CD4-positive, alpha-beta memory T cell (primary cell): ENCODE measurements at regions of chr17 and their contacts with region 1.

Region 1: DNA sequence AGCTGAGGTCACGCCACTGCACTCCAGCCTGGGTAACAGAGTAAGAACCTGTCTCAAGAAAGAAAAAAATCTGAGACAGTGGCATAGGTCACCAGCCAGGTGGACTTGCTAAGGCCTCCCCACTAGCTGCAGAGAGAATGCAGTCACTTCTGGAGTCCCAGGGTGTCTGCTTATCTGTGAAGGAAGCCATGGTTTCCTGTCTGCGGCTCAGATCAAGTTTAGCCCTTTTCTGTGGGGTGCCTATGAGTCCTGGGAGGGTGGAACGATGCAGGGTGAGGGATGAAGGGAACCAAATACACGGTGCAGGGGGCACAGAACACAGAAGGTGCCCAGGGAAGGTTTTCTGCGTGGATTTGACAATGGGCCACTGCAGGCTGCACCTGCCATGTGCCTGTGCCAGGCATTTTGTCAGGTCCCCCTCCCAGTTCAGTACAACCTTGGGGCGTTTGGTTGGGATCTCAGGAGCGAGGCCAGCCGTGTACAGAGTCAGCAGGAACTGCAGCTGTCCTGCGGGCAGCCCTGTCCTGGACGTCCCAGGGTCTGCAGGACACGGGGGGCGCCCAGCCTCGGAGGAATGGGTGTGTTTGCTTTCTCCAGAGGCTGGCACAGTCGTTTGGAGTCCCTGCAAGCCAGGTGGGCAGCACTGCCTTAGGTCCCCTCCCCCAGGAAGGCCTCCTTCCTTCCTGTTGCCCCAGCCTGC is 41.8 kb downstream of the RAB11FIP4 start:
- DNase-seq: peak; percentile 36 to 74 (median 46)
- H3K4me3 ChIP-seq: no peak overlapping the region
- H3K4me3 Mint-ChIP-seq: peak overlapping the region in 5 of 8 donors; percentile 37 to 82 (median 55)
- H3K27ac ChIP-seq: no peak overlapping the region
- H3K27ac Mint-ChIP-seq: peak overlapping the region in 1 of 7 donors; percentile 82
- H3K4me1 ChIP-seq: peaks cover 18% of the 10 kb centered on the region
- H3K4me1 Mint-ChIP-seq: peaks cover 10 to 26% (median 17%) of the 10 kb centered on the region in 4 donors
- H3K27me3 ChIP-seq: no peaks in the 10 kb centered on the region
- H3K27me3 Mint-ChIP-seq: peaks cover 6 to 12% of the 10 kb centered on the region in 2 donors

Region 2: GRCh38 chr17:31195305-31195704 is 237.9 kb before region 1 on chr17:
- CTCF ChIA-PET with region 1: no interaction called
- POLR2A ChIA-PET with region 1: no interaction called
- intact Hi-C with region 1: no loop called
- DNase-seq: no peak
- H3K4me3 ChIP-seq: no peak overlapping the region
- H3K4me3 Mint-ChIP-seq: no peak overlapping the region
- H3K27ac ChIP-seq: no peak overlapping the region
- H3K27ac Mint-ChIP-seq: no peak overlapping the region
- H3K4me1 ChIP-seq: no peaks in the 10 kb centered on the region
- H3K4me1 Mint-ChIP-seq: no peaks in the 10 kb centered on the region
- H3K27me3 ChIP-seq: no peaks in the 10 kb centered on the region
- H3K27me3 Mint-ChIP-seq: no peaks in the 10 kb centered on the region

Region 3: GRCh38 chr17:31388770-31389661 is 44.2 kb before region 1 on chr17:
- CTCF ChIA-PET with region 1: interaction called, 11 read pairs
- POLR2A ChIA-PET with region 1: no interaction called
- intact Hi-C with region 1: no loop called
- DNase-seq: peak in 4 of 5 donors; percentile 21 to 40 (median 32)
- H3K4me3 ChIP-seq: no peak overlapping the region
- H3K4me3 Mint-ChIP-seq: no peak overlapping the region
- H3K27ac ChIP-seq: no peak overlapping the region
- H3K27ac Mint-ChIP-seq: no peak overlapping the region
- H3K4me1 ChIP-seq: peaks cover 9% of the 10 kb centered on the region
- H3K4me1 Mint-ChIP-seq: peaks cover 2 to 23% (median 5%) of the 10 kb centered on the region in 4 donors
- H3K27me3 ChIP-seq: peaks cover 8% of the 10 kb centered on the region
- H3K27me3 Mint-ChIP-seq: peaks cover 15 to 23% of the 10 kb centered on the region in 2 donors

Region 4: DNA sequence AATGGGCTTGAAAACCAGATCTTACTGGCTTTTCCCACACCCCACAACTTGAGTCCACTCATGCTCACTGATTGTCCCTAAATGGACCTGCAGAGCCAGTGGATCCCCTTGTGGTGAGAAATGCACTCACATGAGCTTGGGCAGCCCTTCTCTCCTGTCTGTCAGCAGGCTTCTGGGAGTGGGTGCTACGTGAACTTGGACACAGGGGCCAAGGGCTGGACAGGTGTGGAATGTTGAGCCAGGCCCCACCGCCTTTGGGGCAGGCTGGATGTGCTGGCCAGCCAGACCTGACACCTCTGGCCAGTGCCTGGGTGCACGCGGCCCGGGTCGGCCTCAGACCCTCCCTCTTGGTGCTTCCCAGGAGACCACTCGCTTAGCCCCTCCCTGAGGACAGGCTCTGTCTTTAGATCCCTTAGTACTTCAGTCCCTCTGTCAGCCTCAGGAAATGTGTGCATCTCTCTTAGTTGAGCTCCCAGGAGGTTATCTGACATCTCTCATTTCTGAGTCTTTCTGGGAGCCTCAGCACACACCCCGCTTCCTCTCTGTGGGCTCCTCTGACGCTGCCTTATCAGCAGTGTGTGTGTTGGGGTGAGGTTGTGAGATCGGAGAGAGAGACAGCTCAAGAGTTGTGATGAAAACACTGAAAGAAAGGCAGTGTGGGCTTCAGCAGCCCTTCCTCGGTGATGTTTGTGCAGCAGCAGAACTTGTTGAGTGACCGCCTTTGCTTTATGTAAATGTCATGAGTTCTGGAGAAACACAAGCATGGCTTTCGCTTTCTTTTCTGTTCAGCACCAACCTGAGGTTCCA is 75.2 kb after region 1 on chr17:
- CTCF ChIA-PET with region 1: interaction called, 30 read pairs
- POLR2A ChIA-PET with region 1: interaction called, 9 read pairs
- intact Hi-C with region 1: loop called (anchors 1 kb)
- DNase-seq: peak; percentile 80 to 91 (median 85)
- H3K4me3 ChIP-seq: peak overlapping the region; percentile 42 to 72
- H3K4me3 Mint-ChIP-seq: peak overlapping the region; percentile 87 to 98 (median 94)
- H3K27ac ChIP-seq: peak overlapping the region; percentile 72
- H3K27ac Mint-ChIP-seq: peak overlapping the region; percentile 95 to 99 (median 98)
- H3K4me1 ChIP-seq: peaks cover 58% of the 10 kb centered on the region
- H3K4me1 Mint-ChIP-seq: peaks cover 39 to 73% (median 54%) of the 10 kb centered on the region in 4 donors
- H3K27me3 ChIP-seq: no peaks in the 10 kb centered on the region
- H3K27me3 Mint-ChIP-seq: no peaks in the 10 kb centered on the region

Region 5: DNA sequence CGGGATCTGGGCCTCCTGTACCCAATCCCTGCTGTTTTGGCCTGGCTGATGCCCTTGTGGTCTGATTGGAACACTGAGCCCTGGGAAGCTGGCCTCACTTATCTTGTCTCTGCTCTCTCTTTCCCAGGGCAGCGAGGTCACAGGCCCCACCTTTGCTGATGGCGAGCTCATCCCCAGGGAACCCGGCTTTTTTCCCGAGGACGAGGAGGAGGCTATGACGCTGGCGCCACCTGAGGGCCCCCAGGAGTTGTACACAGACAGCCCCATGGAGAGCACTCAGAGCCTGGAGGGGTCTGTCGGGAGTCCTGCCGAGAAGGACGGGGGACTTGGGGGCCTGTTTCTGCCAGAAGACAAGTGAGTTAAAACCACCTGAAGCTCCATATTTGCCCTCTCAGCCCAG is 84.3 kb after region 1 on chr17:
- CTCF ChIA-PET with region 1: interaction called, 184 read pairs
- POLR2A ChIA-PET with region 1: interaction called, 3 read pairs
- intact Hi-C with region 1: no loop called
- DNase-seq: no peak
- H3K4me3 ChIP-seq: no peak overlapping the region
- H3K4me3 Mint-ChIP-seq: peak overlapping the region in 1 of 8 donors; percentile 20
- H3K27ac ChIP-seq: no peak overlapping the region
- H3K27ac Mint-ChIP-seq: peak overlapping the region in 1 of 7 donors; percentile 79
- H3K4me1 ChIP-seq: no peaks in the 10 kb centered on the region
- H3K4me1 Mint-ChIP-seq: peaks cover 6 to 27% (median 16%) of the 10 kb centered on the region in 4 donors
- H3K27me3 ChIP-seq: no peaks in the 10 kb centered on the region
- H3K27me3 Mint-ChIP-seq: no peaks in the 10 kb centered on the region